Activated naive CD4-positive, alpha-beta T cell treated with anti-CD3 and anti-CD28 coated beads for 36 hours (primary cell): ENCODE measurements at regions of chr5 and their contacts with region 1.

Region 1: DNA sequence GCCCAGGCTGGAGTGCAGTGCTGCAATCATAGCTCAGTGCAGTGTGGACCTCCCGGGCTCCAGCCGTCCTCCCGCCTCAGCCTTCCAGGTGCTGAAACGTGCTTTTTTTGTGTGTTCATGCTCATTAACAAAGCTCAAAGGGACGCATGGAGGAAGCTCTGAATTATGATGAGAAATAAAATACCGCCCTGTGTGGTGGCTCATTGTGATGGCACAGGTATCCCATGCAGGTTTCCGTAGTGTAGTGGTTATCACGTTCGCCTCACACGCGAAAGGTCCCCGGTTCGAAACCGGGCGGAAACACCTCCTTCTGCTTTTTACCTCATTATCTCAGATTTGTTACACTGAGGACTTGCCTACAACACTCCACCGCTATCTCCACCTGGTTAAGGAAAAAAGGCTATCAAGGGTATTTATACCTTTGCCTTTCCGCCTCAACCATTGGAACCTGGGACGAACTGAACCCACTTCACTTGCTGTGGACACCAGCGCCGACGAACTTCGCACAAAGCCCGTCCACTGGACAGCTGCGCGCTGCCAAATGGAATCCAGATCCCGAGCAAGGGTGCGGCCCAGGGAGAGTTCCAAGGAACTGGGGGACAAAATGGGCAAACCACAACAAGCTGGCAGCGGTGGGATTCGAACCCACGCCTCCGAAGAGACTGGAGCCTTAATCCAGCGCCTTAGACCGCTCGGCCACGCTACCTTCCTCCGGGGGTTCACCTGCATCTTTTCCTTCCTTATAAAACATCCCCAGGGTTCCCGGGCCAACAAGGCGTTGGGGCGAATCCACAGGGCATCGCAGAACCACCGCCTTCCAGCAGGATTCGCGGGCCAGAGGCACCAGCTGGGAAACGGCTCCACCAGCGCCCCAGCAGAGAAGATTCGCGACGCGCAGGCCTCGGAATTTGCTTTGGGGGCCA is 26.3 kb downstream of the OR2V2 start:
- DNase-seq: peak; percentile 91
- H3K4me3 Mint-ChIP-seq: peak overlapping the region; percentile 89
- H3K27ac Mint-ChIP-seq: peak overlapping the region; percentile 81
- H3K4me1 Mint-ChIP-seq: peaks cover 41% of the 10 kb centered on the region
- H3K27me3 Mint-ChIP-seq: peaks cover 51% of the 10 kb centered on the region

Region 2: GRCh38 chr5:180802325-180803180 is 371.1 kb before region 1 on chr5 and contains the start of gene MGAT1:
- CTCF ChIA-PET with region 1: interaction called, 7 read pairs
- intact Hi-C with region 1: loop called (anchors 5 kb)
- DNase-seq: peak; percentile 78
- H3K4me3 Mint-ChIP-seq: peak within 1 kb of the TSS; percentile 98
- H3K27ac Mint-ChIP-seq: peak within 1 kb of the TSS; percentile 99
- H3K4me1 Mint-ChIP-seq: peaks cover 77% of the 10 kb centered on the region
- H3K27me3 Mint-ChIP-seq: no peaks in the 10 kb centered on the region
- total RNA-seq, gene MGAT1: 70.0 to 75.2 TPM

Region 3: DNA sequence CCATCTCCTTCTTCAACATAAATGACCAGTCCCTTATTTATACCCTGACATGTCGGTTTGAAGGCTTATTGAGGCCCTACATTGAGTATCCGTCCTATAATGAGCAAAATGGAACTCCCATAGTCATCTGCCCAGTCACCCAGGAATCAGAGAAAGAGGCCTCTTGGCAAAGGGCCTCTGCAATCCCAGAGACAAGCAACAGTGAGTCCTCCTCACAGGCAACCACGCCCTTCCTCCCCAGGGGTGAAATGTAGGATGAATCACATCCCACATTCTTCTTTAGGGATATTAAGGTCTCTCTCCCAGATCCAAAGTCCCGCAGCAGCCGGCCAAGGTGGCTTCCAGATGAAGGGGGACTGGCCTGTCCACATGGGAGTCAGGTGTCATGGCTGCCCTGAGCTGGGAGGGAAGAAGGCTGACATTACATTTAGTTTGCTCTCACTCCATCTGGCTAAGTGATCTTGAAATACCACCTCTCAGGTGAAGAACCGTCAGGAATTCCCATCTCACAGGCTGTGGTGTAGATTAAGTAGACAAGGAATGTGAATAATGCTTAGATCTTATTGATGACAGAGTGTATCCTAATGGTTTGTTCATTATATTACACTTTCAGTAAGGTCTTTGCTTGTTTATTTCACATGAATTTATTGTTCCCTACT is 223.3 kb before region 1 on chr5:
- CTCF ChIA-PET with region 1: no interaction called
- intact Hi-C with region 1: no loop called
- DNase-seq: no peak
- H3K4me3 Mint-ChIP-seq: no peak overlapping the region
- H3K27ac Mint-ChIP-seq: no peak overlapping the region
- H3K4me1 Mint-ChIP-seq: no peaks in the 10 kb centered on the region
- H3K27me3 Mint-ChIP-seq: no peaks in the 10 kb centered on the region